ENCODE measurements at regions of chr1 and their contacts with region 1.

Region 1: DNA sequence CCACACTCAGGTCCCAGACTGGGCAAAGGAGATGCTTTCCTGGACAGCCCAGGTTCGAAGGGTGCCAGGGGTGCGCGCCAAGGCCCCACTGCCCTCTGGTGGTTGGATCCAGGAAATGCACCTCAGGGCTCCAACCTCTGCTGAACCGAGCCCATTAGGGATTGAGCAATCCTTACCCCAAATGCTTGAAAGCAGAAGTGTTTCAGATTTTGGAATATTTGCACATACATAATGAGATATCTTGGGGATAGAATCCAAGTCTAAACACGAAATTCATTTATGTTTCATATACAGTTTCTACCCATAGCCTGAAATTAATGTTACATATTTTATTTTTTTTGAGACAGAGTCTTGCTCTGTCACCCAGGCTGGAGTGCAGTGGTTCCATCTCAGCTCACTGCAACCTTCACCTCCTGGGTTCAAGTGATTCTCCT is 57.4 kb downstream of the SLC9A1 start:
- DNase-seq: peak; percentile 75 to 86
- ATAC-seq: peak; percentile 83 to 91 (median 86)
- H3K4me3 ChIP-seq: no peak overlapping the region
- H3K27ac ChIP-seq: no peak overlapping the region
- H3K4me1 ChIP-seq: no peaks in the 10 kb centered on the region
- H3K27me3 ChIP-seq: no peaks in the 10 kb centered on the region
- CTCF ChIP-seq: peak; percentile 95

Region 2: DNA sequence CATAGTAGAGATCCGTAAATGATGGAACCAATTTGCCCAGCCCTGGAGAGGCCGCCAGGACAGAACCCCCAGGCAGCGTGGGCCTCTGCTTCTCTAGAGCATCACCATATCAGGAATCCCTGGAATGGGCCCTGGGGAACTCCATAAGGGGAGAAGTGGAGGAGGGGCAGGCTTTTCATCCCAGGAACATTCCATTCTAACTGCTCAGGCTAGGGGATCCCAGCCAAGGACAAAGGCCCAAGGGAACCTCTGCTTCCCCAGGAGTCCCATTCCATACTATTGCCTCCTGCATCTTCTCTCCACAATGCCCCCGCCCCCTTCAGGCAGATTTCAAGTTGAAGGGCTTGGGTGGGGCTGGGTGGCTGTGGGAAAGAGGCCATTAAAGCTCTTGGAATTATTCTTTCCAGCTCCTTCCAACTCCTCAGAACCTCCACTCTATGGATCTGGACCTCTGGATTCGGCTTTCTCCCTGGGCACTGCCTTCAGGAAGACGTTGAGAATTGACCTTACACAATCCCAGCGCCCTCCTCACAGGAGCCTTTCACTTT is 98.0 kb before region 1 on chr1:
- intact Hi-C with region 1: loop called (anchors 5 kb)
- DNase-seq: peak; percentile 59 to 77
- ATAC-seq: peak; percentile 25 to 81 (median 70)
- H3K4me3 ChIP-seq: no peak overlapping the region
- H3K27ac ChIP-seq: peak overlapping the region; percentile 23
- H3K4me1 ChIP-seq: peaks cover 7% of the 10 kb centered on the region
- H3K27me3 ChIP-seq: peaks cover 0 to 20% (median 6%) of the 10 kb centered on the region in 3 donors
- CTCF ChIP-seq: no peak

Region 3: DNA sequence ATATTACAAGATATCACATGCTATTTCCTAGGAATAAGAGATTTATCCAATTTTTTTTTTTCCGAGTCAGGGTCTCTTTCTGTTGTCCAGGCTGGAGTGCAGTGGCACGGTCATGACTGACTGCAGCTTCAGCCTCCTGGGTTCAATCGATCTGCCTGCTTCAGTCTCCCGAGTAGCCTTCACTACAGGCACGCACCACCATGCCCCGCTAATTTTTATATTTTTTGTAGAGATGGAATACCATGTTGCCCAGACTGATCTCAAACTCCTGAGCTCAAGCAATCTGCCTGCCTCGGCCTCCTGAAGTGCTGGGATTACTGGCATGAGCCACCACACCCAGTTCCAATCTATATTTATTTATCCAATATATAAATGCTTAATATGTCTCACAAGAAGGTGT is 119.0 kb after region 1 on chr1:
- intact Hi-C with region 1: no loop called
- DNase-seq: no peak
- ATAC-seq: no peak
- H3K4me3 ChIP-seq: no peak overlapping the region
- H3K27ac ChIP-seq: no peak overlapping the region
- H3K4me1 ChIP-seq: no peaks in the 10 kb centered on the region
- H3K27me3 ChIP-seq: no peaks in the 10 kb centered on the region
- CTCF ChIP-seq: no peak

Measured in psoas muscle (tissue), 8 donors.